ENCODE measurements at regions of chr11 and their contacts with region 1.

Region 1: GRCh38 chr11:115504276-115505158 is at the start of gene CADM1:
- DNase-seq: peak; percentile 98
- H3K4me3 ChIP-seq: peak within 1 kb of the TSS; percentile 77
- H3K27ac ChIP-seq: peak within 1 kb of the TSS; percentile 58
- H3K4me1 ChIP-seq: peaks cover 30% of the 10 kb centered on the region
- CTCF ChIP-seq: peak; percentile 74
- total RNA-seq, gene CADM1: 49.0 and 59.7 TPM in 2 replicates

Region 2: DNA sequence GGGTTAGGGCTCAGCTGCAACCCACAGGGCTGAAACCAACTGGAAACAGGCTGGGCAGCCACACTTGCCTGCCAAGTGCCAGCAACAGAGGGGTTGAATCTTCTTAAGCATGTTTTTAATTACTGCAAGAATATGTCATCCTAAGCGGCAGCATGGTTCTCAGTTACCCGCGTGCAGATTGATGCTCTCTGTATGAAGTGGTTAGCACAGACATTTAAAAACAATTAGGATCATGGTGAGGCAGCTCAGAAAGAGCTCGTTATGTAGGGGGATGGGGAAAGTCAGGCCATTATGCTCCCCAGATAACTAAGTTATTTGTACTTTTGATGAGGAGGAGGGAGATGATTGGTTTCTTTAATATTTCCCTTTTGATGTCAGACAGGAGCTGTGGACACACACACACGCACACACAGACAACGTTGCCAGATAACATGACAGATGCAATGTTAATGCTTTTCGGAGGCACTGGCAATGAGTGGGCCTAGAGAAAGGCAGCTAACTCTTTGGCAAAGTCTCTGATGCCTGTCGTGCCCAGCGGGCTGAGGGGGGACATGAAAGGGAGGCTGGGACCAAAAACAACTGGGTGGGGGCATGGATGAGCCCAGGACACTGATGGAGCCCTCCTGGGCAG is 436.5 kb before region 1 on chr11:
- CTCF ChIA-PET with region 1: no interaction called
- POLR2A ChIA-PET with region 1: no interaction called
- intact Hi-C with region 1: no loop called
- DNase-seq: no peak
- H3K4me3 ChIP-seq: no peak overlapping the region
- H3K27ac ChIP-seq: no peak overlapping the region
- H3K4me1 ChIP-seq: no peaks in the 10 kb centered on the region
- CTCF ChIP-seq: no peak

Region 3: DNA sequence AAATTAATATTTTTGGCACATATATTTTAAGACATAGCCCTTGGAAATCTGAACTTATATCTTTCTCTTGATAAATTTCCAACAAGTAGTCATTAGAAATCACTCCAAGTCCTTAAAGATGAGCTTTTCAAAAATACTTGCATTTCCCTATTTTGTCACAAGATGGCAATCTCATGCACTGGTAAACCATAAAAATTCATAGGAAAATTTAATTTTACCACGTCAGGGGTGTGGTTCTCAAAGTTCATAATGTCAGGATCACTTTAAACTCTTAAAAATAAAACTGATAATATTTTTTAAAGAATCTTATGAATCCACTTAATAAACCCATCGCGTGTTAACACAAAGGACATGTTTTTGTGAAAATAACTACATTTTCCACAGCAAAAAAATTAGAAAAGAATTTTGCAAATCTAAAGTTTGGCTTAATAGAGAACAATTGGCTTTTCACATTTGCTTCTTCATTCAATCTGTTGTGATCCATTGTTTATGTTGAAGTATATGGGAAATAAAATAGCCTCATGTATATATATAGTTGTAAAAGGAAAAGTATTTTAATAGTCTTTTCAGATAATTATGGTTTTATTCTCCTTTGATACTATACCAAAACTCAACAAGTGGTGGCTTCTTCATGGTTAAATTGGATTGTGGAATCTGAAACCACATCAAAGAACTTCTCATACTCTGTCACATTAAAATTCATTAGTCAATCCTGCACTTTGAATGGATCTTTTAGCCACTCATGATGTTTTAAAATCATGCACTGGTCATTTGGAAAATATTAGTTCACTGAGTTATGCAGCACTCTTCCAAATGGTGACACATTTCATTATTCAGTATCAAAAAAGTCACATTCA is 169.4 kb before region 1 on chr11:
- CTCF ChIA-PET with region 1: interaction called, 3 read pairs
- POLR2A ChIA-PET with region 1: interaction called, 6 read pairs
- intact Hi-C with region 1: loop called (anchors 1 kb)
- DNase-seq: peak; percentile 64
- H3K4me3 ChIP-seq: no peak overlapping the region
- H3K27ac ChIP-seq: no peak overlapping the region
- H3K4me1 ChIP-seq: no peaks in the 10 kb centered on the region
- CTCF ChIP-seq: peak; percentile 95

Region 4: DNA sequence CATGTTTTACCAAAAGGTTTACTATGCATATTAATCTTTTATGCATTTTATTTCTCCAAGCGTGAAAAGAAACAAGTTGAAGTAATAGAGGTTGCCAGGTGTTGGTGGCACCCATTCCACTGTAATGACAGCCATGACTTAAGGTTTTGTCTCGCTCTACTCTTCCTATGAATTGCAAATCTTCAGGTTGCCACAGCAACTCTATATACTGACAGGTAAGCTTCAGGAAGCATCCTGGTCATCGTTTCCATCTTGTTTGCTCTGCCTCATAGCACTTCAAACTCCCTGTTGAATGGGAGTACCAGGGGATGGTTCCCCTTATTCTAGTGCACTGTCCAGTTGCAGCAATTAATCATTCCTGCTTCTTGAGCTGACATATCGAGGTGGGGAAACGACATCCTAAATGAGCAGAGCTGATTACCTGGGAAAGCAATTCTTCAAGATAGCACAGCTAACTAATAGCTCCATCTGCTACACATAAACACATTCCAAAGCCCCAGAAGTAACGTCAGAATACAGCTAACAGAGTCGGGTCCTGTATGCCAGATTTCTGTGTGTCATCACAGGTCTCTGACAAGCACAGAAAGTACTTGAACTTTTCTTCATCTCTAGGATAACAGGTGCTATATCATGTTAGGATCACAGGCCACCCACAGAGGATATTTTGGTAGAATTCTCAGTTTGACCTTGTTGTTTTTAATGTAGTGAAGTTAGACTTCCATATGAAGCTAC is 80.6 kb before region 1 on chr11:
- CTCF ChIA-PET with region 1: no interaction called
- POLR2A ChIA-PET with region 1: interaction called, 6 read pairs
- intact Hi-C with region 1: loop called (anchors 2 kb)
- DNase-seq: no peak
- H3K4me3 ChIP-seq: no peak overlapping the region
- H3K27ac ChIP-seq: no peak overlapping the region
- H3K4me1 ChIP-seq: peaks cover 55% of the 10 kb centered on the region
- CTCF ChIP-seq: no peak

Region 5: DNA sequence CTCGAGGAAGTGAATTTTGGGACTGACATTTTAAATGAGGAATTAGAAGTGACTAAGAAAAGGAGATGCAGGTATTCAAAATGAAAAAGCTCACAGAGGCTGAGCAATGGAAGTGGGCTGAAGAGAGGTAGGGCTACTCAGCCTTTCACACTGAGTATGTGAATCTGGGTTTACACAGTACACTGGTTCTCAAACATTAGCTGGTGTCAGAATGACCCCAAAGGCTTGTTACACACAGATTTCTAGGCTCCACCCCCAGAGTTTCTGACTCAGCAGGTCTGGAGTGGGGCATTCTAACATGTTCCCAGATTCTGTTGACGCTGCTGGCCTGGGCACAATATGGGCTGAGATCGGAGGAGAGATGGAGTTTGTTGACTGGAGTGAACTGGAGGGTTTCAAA is 33.1 kb before region 1 on chr11:
- CTCF ChIA-PET with region 1: interaction called, 8 read pairs
- POLR2A ChIA-PET with region 1: interaction called, 11 read pairs
- intact Hi-C with region 1: loop called (anchors 1 kb)
- DNase-seq: peak; percentile 26
- H3K4me3 ChIP-seq: peak overlapping the region; percentile 26
- H3K27ac ChIP-seq: peak overlapping the region; percentile 87
- H3K4me1 ChIP-seq: peaks cover 74% of the 10 kb centered on the region
- CTCF ChIP-seq: no peak

Region 6: DNA sequence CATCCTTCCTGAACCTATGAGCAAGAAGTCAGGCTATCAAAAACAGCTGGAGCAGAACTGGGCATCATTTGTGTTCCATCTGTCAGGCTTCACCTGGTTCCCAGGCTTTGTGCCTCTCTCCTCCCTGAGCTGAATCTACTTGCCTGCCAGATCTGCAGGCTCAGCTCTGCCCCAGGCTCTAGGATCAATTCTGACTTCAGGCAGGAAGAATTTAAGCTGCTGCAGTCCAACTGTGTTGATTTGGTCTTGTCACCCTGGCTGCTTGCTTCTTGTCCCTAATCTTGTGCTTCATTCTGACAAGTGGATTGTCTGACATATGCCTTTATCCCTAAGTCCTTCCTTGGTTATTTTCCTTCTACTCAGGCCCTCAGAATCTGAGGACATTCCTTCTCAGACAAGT is 31.3 kb after region 1 on chr11:
- CTCF ChIA-PET with region 1: no interaction called
- POLR2A ChIA-PET with region 1: no interaction called
- intact Hi-C with region 1: no loop called
- DNase-seq: no peak
- H3K4me3 ChIP-seq: no peak overlapping the region
- H3K27ac ChIP-seq: no peak overlapping the region
- H3K4me1 ChIP-seq: no peaks in the 10 kb centered on the region
- CTCF ChIP-seq: no peak

Region 7: GRCh38 chr11:115598257-115598901 is 93.9 kb after region 1 on chr11:
- CTCF ChIA-PET with region 1: no interaction called
- POLR2A ChIA-PET with region 1: no interaction called
- intact Hi-C with region 1: no loop called
- DNase-seq: no peak
- H3K4me3 ChIP-seq: no peak overlapping the region
- H3K27ac ChIP-seq: no peak overlapping the region
- H3K4me1 ChIP-seq: no peaks in the 10 kb centered on the region
- CTCF ChIP-seq: no peak

Region 8: DNA sequence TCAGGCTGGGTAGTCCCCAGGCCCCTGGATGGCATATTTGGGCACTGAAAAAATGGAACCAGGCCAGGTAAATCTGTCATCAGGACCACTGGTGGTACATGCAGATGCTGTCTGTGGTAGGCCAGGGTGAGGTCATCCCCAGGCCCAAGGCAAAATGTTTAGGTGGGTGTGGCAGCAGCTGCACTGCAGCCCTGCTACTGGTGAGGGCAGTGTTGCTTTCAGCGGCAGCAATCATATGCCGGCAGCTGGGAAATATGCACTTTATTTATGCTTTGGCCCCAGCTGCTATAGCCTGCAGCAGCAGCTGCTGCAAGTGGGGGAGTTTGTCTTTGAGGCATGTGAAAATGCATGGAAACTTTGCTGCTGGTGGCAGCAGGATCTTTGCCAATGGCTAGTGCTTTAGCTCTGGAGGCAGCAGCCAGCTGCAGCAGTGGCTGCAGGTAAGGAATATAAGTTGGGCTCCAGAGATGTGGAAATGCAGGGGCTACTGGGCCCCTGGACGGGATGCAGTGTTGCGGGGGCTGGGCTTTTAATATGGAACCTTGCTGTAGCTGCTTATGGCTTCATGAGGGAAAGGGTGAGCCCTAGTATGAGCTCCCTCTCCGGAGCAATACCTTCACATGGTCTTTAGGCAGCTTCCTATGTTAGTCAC is 365.4 kb after region 1 on chr11:
- CTCF ChIA-PET with region 1: no interaction called
- POLR2A ChIA-PET with region 1: interaction called, 6 read pairs
- intact Hi-C with region 1: loop called (anchors 5 kb)
- DNase-seq: peak; percentile 82
- H3K4me3 ChIP-seq: no peak overlapping the region
- H3K27ac ChIP-seq: no peak overlapping the region
- H3K4me1 ChIP-seq: peaks cover 47% of the 10 kb centered on the region
- CTCF ChIP-seq: peak; percentile 89

Region 9: DNA sequence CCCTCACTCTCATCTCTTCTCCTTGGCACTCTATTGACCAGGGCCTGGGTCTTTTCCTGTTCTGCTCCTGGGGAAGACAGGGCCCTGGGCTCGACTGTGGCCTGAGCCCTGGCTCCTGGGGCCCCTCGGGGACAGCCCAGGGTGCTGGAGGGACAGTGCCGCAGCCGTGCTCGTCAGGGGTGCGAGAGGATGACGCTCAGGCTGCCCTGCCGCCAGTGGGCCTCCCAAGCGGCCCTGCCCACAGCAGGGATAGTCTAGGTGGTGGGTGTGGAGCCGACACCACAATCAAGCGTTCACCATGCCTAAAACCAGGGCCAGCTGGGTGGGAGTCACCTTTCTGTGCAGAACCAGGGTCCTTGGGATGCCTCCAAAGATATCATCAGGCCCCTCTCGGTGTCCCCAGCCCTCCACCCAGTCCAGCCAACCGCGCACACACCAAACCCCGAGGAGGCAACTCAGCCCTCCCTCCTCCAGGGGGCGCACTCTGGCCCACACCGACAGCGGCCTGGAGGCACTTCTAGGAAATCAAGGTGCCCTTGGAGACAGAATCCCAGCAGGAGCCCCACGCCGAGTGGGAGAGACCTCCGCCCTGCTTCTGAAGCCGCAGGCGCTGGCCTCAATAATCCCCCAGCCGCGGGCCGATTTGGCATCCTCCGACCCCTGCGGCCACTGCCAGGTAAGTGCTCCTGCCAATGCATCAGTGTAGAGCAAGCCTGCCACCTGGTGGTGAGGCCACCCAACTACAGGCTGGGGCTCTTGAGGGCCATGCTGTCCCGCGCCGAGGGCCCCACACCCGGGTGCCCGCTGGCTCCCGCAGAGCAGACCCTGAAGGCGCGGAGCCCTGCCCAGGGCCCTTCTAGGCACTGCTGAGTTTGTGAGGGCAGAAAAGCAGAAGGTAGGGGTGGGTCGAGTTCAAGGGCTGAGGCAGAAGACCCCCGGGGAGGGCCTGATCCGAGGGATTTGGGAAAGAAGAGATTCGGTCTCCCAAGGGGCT is 771.8 kb after region 1 on chr11:
- CTCF ChIA-PET with region 1: no interaction called
- POLR2A ChIA-PET with region 1: no interaction called
- intact Hi-C with region 1: loop called (anchors 2 kb)
- DNase-seq: peak; percentile 62
- H3K4me3 ChIP-seq: no peak overlapping the region
- H3K27ac ChIP-seq: no peak overlapping the region
- H3K4me1 ChIP-seq: no peaks in the 10 kb centered on the region
- CTCF ChIP-seq: peak; percentile 90

Measured in OCI-LY7 (cell line).